Aorta (tissue), 5 donors: ENCODE measurements at regions of chr7 and their contacts with region 1.

Region 1: GRCh38 chr7:55365675-55366460 is 731 bp downstream of the LANCL2 start:
- DNase-seq: peak; percentile 96 to 98
- ATAC-seq: peak; percentile 99
- H3K4me3 ChIP-seq: peak overlapping the region; percentile 76 to 83
- H3K27ac ChIP-seq: peak overlapping the region; percentile 64 to 81
- H3K4me1 ChIP-seq: peaks cover 0 to 4% of the 10 kb centered on the region in 2 donors
- H3K27me3 ChIP-seq: no peaks in the 10 kb centered on the region

Region 2: DNA sequence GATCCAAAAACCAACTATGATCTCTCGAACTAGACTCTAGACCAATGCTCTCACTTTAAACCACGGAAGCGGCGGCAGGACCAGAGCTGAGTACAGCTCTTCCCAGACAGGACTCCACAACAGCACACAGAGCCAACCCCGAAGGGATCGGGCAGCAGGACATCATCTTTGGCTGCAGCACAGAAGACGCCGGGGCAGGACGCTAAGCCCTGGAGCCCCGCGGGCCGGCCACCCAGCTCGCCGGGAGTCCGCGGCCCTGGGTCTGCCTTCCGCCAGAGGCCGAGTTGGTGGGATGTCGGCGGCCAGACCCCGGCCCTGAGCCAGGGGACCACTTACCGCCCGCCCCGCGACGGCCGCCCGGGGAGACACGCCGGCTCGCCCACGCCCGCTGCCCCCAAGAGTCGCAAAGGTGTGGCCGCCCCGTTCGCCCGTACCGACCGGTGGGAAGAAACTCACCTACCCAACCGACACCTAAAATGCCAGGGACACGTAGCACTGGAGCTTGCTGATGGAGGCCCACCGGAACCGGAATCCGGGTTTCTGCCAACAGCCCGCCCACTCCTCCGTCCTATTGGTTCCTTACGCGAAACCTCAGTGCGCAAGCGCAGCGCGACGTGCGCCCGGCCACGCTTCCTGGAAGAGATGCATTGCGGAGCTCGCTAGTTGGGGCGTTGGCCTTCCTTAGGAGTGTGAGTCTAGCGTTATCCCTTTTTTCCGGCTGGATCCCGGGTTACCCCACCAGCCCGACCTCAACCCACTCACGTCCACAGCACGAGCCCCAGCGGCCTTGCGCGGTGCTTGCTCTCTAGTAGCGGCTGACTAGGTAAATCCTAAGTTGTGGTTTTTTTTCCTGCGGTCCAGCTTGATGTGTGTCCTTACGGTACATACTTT is 606.9 kb before region 1 on chr7 and contains the start of gene SEC61G:
- intact Hi-C with region 1: loop called in 1 of 2 experiments (anchors 5 kb)
- DNase-seq: peak; percentile 99
- ATAC-seq: peak; percentile 99
- H3K4me3 ChIP-seq: peak within 1 kb of the TSS; percentile 70 to 82
- H3K27ac ChIP-seq: peak within 1 kb of the TSS in 1 of 2 donors; percentile 96
- H3K4me1 ChIP-seq: peaks cover 0 to 3% of the 10 kb centered on the region in 2 donors
- H3K27me3 ChIP-seq: no peaks in the 10 kb centered on the region
- total RNA-seq, gene SEC61G: 90.1 to 109 TPM

Region 3: DNA sequence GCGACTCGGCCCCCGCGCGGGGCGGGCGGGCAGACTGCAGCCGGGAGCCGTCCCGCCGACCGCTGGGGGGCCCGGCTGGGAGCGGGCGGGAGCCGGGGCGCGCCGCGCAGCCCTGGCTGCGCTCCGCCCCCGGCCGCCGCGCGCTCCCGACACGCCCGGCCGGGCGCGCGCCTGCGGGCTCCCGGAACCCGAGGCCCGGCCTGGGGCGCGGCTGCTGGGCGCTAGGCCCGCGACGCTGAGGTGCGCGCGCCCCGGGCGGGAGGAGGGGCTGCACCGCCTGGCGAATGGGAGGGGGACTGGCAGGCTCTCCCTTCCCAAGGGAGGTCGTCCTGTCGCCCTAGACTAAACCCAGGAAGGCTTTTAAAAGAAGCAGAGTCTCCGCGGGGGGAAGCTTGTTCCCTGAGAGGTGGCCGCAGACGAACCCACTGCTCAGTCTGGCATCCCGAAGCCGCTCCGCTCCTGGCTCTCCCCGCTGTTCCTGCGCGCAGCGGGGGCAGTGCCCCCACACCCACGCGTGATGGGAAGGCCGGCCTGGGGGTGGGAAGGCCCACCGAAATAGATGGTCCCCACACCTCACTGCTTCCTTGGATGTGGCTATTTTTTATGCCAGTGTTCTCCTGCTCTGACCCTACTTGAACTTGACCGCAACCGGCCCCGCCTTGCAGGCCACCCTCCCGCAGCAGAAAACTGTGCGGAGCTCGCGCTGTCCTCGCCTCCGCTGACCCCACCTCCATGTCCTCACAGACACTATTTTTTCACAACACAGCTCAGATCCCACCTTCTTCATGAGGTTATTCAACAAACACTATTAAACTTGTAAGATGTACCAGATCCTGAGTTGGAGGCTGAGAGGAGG is 206.7 kb after region 1 on chr7 and contains the start of gene VOPP1:
- intact Hi-C with region 1: loop called in 1 of 2 experiments (anchors 10 kb)
- DNase-seq: peak; percentile 74 to 92
- ATAC-seq: peak; percentile 90
- H3K4me3 ChIP-seq: peak within 1 kb of the TSS; percentile 90 to 97
- H3K27ac ChIP-seq: peak within 1 kb of the TSS; percentile 73 to 79
- H3K4me1 ChIP-seq: peaks cover 3 to 11% of the 10 kb centered on the region in 2 donors
- H3K27me3 ChIP-seq: no peaks in the 10 kb centered on the region
- total RNA-seq, gene VOPP1: 74.1 to 82.9 TPM

Region 4: GRCh38 chr7:55629051-55629677 is 263.3 kb after region 1 on chr7:
- intact Hi-C with region 1: no loop called
- DNase-seq: no peak
- ATAC-seq: no peak
- H3K4me3 ChIP-seq: no peak overlapping the region
- H3K27ac ChIP-seq: no peak overlapping the region
- H3K4me1 ChIP-seq: no peaks in the 10 kb centered on the region
- H3K27me3 ChIP-seq: no peaks in the 10 kb centered on the region

Region 5: DNA sequence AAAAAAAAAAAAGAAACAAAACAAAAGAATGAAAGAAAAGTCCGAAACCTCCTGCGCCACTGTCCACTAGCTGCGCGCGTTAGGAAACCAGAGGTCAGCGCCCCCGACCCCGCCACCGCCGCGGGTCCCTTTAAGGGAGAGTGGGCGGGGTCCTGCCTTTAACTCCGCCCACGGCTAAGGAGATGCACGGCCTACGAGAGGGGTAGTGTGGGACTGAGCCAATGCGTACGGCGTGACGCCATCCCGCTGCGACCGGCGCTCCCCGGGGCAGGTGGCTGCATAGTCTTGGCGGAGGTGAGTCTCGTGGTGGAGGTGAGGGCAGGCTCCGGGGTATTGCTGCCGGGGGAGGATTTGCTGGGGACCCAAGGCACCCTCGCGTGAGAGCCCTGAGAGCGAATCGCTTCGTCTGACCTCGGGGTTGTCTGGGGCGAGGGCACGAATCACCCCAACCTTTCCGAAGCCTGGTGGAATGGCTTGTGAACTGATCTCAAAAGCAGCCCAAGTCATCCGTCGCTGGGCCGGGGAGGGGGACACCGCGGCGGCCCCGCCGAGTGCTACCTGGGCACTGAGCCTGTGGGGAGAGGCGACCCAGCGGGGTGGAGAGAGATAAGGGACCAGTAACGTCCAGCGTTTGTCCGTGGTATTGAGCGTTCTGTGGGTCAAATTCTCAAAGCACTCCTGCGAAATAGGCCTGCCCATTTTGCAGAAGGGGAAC is 585.9 kb after region 1 on chr7 and contains the start of gene MRPS17:
- intact Hi-C with region 1: loop called in 1 of 2 experiments (anchors 5 kb)
- DNase-seq: peak; percentile 93 to 97
- ATAC-seq: peak; percentile 99
- H3K4me3 ChIP-seq: peak within 1 kb of the TSS; percentile 40 to 42
- H3K27ac ChIP-seq: peak within 1 kb of the TSS in 1 of 2 donors; percentile 29
- H3K4me1 ChIP-seq: no peaks in the 10 kb centered on the region
- H3K27me3 ChIP-seq: no peaks in the 10 kb centered on the region
- total RNA-seq, gene MRPS17: 8.6 to 9.0 TPM